Naive thymus-derived CD4-positive, alpha-beta T cell (primary cell): ENCODE measurements at regions of chr5 and their contacts with region 1.

Region 1: GRCh38 chr5:37412515-37413277 is 33.6 kb downstream of the WDR70 start:
- DNase-seq: peak in 7 of 9 donors; percentile 1 to 37 (median 28)
- ATAC-seq: peak; percentile 70
- H3K4me3 ChIP-seq: no peak overlapping the region
- H3K4me3 Mint-ChIP-seq: no peak overlapping the region
- H3K27ac ChIP-seq: no peak overlapping the region
- H3K27ac Mint-ChIP-seq: no peak overlapping the region
- H3K4me1 ChIP-seq: no peaks in the 10 kb centered on the region
- H3K4me1 Mint-ChIP-seq: no peaks in the 10 kb centered on the region
- H3K27me3 ChIP-seq: no peaks in the 10 kb centered on the region
- H3K27me3 Mint-ChIP-seq: no peaks in the 10 kb centered on the region

Region 2: GRCh38 chr5:36230151-36230793 is 1182.4 kb before region 1 on chr5:
- CTCF ChIA-PET with region 1: no interaction called
- POLR2A ChIA-PET with region 1: no interaction called
- intact Hi-C with region 1: no loop called
- DNase-seq: no peak
- ATAC-seq: no peak
- H3K4me3 ChIP-seq: no peak overlapping the region
- H3K4me3 Mint-ChIP-seq: no peak overlapping the region
- H3K27ac ChIP-seq: no peak overlapping the region
- H3K27ac Mint-ChIP-seq: no peak overlapping the region
- H3K4me1 ChIP-seq: no peaks in the 10 kb centered on the region
- H3K4me1 Mint-ChIP-seq: peaks cover 0 to 22% (median 9%) of the 10 kb centered on the region in 7 donors
- H3K27me3 ChIP-seq: no peaks in the 10 kb centered on the region
- H3K27me3 Mint-ChIP-seq: no peaks in the 10 kb centered on the region

Region 3: GRCh38 chr5:37435261-37435660 is 22.6 kb after region 1 on chr5:
- CTCF ChIA-PET with region 1: no interaction called
- POLR2A ChIA-PET with region 1: no interaction called
- intact Hi-C with region 1: no loop called
- DNase-seq: no peak
- ATAC-seq: no peak
- H3K4me3 ChIP-seq: no peak overlapping the region
- H3K4me3 Mint-ChIP-seq: no peak overlapping the region
- H3K27ac ChIP-seq: no peak overlapping the region
- H3K27ac Mint-ChIP-seq: no peak overlapping the region
- H3K4me1 ChIP-seq: no peaks in the 10 kb centered on the region
- H3K4me1 Mint-ChIP-seq: peaks cover 0 to 12% (median 5%) of the 10 kb centered on the region in 7 donors
- H3K27me3 ChIP-seq: no peaks in the 10 kb centered on the region
- H3K27me3 Mint-ChIP-seq: no peaks in the 10 kb centered on the region

Region 4: GRCh38 chr5:37554938-37555337 is 142.2 kb after region 1 on chr5:
- CTCF ChIA-PET with region 1: no interaction called
- POLR2A ChIA-PET with region 1: no interaction called
- intact Hi-C with region 1: loop called in 1 of 2 experiments (anchors 2 kb)
- DNase-seq: no peak
- ATAC-seq: no peak
- H3K4me3 ChIP-seq: no peak overlapping the region
- H3K4me3 Mint-ChIP-seq: no peak overlapping the region
- H3K27ac ChIP-seq: no peak overlapping the region
- H3K27ac Mint-ChIP-seq: no peak overlapping the region
- H3K4me1 ChIP-seq: no peaks in the 10 kb centered on the region
- H3K4me1 Mint-ChIP-seq: peaks cover 6 to 30% (median 19%) of the 10 kb centered on the region in 7 donors
- H3K27me3 ChIP-seq: no peaks in the 10 kb centered on the region
- H3K27me3 Mint-ChIP-seq: no peaks in the 10 kb centered on the region

Region 5: GRCh38 chr5:37837414-37838032 is 424.8 kb after region 1 on chr5:
- CTCF ChIA-PET with region 1: no interaction called
- POLR2A ChIA-PET with region 1: no interaction called
- intact Hi-C with region 1: loop called in 1 of 2 experiments (anchors 10 kb)
- DNase-seq: peak in 5 of 9 donors; percentile 5 to 74 (median 8)
- ATAC-seq: no peak
- H3K4me3 ChIP-seq: no peak overlapping the region
- H3K4me3 Mint-ChIP-seq: peak overlapping the region; percentile 47 to 80 (median 68)
- H3K27ac ChIP-seq: no peak overlapping the region
- H3K27ac Mint-ChIP-seq: peak overlapping the region in 1 of 9 donors; percentile 5
- H3K4me1 ChIP-seq: peaks cover 0 to 4% of the 10 kb centered on the region in 2 donors
- H3K4me1 Mint-ChIP-seq: peaks cover 14 to 34% (median 29%) of the 10 kb centered on the region in 7 donors
- H3K27me3 ChIP-seq: peaks cover 5 to 12% of the 10 kb centered on the region in 2 donors
- H3K27me3 Mint-ChIP-seq: peaks cover 76 to 89% (median 81%) of the 10 kb centered on the region in 5 donors